HEK293 (cell line): ENCODE measurements at regions of chr19 and their contacts with region 1.

Region 1: DNA sequence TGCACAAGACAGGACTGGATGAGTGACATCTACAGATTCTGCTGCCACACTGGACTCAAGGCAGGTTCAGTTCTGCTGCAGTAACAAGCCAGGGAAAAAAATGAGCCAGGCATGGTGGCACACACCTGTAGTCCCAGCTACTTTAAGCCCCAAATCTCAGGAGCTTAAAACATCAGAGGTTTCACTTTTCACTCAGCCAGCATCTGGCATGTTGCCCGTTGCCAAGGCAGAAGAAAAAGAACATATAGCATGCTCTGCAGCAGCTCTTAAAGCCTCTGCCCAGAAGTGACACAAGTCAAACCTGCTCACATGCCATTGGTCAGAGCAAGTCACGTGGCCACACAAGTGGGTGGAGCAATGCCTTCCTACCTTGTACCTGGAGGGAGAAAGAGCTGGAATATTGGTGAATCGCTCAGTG is 14.7 kb upstream of the ADGRE5 start:
- H3K4me3 ChIP-seq: no peak overlapping the region
- H3K27ac ChIP-seq: no peak overlapping the region
- H3K4me1 ChIP-seq: peaks cover 3% of the 10 kb centered on the region; the same call in 1 of the 2 replicates
- CTCF ChIP-seq: no peak

Region 2: GRCh38 chr19:14381689-14382474 is 15.4 kb after region 1 on chr19:
- CTCF ChIA-PET with region 1: interaction called, 7 read pairs
- POLR2A ChIA-PET with region 1: interaction called, 12 read pairs
- H3K4me3 ChIP-seq: peak overlapping the region; percentile 47
- H3K27ac ChIP-seq: peak overlapping the region; percentile 7; the same call in 1 of the 2 replicates
- H3K4me1 ChIP-seq: 0 out of 2 replicates have a peak, but pooled peaks cover 2% of the 10 kb centered on the region
- CTCF ChIP-seq: no peak

Region 3: DNA sequence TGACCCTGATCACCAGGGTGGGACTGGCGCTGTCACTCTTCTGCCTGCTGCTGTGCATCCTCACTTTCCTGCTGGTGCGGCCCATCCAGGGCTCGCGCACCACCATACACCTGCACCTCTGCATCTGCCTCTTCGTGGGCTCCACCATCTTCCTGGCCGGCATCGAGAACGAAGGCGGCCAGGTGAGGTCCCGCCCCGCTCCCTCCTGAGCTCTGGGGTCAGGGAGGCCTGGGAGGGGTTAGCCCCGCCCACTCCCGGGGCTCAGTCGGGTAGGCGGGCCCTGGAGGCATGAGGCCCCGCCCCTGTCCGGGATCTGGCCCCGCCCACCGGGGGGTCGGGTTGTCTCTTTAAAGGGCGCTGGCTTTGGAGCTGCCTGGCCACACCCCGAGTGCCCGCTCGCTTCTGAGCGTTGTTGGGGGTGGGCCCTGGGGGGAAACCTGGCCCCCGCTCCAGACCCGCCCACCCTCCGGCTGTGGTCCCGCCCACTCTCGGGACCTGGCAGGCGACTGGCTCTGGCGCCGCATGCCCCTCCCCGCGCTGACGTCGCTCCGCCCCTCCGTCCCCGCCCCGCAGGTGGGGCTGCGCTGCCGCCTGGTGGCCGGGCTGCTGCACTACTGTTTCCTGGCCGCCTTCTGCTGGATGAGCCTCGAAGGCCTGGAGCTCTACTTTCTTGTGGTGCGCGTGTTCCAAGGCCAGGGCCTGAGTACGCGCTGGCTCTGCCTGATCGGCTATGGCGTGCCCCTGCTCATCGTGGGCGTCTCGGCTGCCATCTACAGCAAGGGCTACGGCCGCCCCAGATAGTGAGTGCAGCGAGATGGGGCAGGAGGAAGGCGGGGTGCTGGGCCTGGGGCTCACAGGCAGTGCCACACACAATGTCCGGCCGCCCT is 39.5 kb after region 1 on chr19:
- CTCF ChIA-PET with region 1: interaction called, 47 read pairs
- POLR2A ChIA-PET with region 1: interaction called, 6 read pairs
- H3K4me3 ChIP-seq: no peak overlapping the region
- H3K27ac ChIP-seq: peak overlapping the region; percentile 50; the same call in 1 of the 2 replicates
- H3K4me1 ChIP-seq: no peaks in the 10 kb centered on the region
- CTCF ChIP-seq: peak; percentile 95